KBM-7 (cell line): ENCODE measurements at regions of chr10 and their contacts with region 1.

Region 1: DNA sequence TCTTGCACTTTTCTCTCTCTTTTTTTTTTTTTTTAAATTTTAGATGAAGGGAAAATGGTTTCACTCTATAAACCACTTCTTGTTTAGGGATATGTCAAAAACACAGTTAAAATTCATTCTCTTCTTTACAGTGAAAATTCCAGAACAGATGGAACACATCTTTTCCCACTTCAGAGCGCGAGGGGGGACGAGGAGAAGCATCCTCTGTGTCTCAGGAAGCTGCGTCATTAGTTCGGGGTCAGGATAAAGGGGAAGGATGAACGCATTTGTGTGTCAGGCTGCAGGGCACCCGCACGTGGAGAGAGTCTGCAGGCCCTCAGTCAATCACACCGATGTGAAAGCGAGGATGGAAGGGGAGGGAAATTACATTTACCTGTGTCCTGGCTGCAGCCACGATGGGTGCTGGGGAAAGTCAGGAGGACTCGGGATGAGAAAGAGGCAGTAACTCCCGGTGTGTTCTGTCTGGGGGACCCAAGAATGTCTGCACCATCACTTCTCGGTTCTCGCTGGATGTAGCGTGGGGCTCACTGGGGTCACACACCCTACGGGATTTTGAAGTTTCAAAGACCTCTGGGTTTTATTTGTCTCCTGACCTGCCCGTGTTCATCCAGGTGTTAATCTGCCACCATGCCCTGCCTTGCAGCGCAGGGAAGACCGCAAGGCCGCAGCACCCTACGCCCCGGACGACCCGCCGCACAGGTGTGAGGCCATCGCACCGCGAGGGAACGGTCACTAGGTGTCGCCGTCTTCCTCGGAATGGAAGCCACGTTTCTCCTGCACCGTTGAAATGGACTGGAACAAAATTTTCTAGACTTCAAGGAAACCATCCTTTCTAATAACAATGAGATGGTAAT is 66.7 kb upstream of the PITRM1 start:
- DNase-seq: peak; percentile 60

Region 2: GRCh38 chr10:2575460-2575859 is 663.8 kb before region 1 on chr10:
- in situ Hi-C with region 1: no loop called
- DNase-seq: no peak

Region 3: GRCh38 chr10:4767033-4767814 is 1527.9 kb after region 1 on chr10:
- in situ Hi-C with region 1: loop called (anchors 25 kb)
- DNase-seq: peak; percentile 13